GM10248 (cell line): ENCODE measurements at regions of chr1 and their contacts with region 1.

Region 1: DNA sequence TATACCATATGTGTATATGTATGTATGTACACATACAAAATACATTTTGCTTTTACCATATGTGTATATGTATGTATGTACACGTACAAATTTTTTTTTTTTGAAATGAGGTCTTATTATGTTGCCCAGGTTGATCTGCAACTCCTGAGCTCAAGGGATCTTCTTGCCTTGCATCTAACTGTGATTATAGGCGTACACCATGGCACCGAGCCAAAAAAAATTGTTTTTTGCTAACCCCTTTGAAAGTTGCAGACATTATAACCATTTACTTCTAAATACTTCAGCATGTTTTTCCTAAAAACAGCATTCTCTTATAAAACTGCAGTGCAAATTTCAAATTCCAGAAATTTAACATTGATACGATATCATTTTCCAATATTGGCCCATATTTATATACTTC is 147.0 kb downstream of the POU2F1 start:
- DNase-seq: no peak
- CTCF ChIP-seq: no peak

Region 2: GRCh38 chr1:167357305-167357704 is 10.4 kb before region 1 on chr1:
- CTCF ChIA-PET with region 1: interaction called, 12 read pairs
- POLR2A ChIA-PET with region 1: no interaction called
- DNase-seq: no peak
- CTCF ChIP-seq: no peak

Region 3: GRCh38 chr1:167499664-167500101 is 132.0 kb after region 1 on chr1:
- CTCF ChIA-PET with region 1: no interaction called
- POLR2A ChIA-PET with region 1: no interaction called
- DNase-seq: peak; percentile 79
- CTCF ChIP-seq: no peak